Sigmoid colon (tissue), 7 donors: ENCODE measurements at regions of chr19 and their contacts with region 1.

Region 1: GRCh38 chr19:12365236-12366162 is at the start of gene ZNF442:
- DNase-seq: peak; percentile 98
- H3K4me3 ChIP-seq: peak within 1 kb of the TSS; percentile 69 to 95 (median 82)
- H3K27ac ChIP-seq: peak within 1 kb of the TSS; percentile 87 to 93 (median 90)
- H3K4me1 ChIP-seq: peaks cover 0 to 18% (median 10%) of the 10 kb centered on the region in 4 donors
- H3K27me3 ChIP-seq: no peaks in the 10 kb centered on the region
- CTCF ChIP-seq: peak; percentile 73 to 82 (median 77)
- EP300 ChIP-seq: peak in 1 of 4 donors; percentile 51
- POLR2A ChIP-seq: peak; percentile 77 to 78
- total RNA-seq, gene ZNF442: 0.55 to 3.2 (median 2.9) TPM

Region 2: DNA sequence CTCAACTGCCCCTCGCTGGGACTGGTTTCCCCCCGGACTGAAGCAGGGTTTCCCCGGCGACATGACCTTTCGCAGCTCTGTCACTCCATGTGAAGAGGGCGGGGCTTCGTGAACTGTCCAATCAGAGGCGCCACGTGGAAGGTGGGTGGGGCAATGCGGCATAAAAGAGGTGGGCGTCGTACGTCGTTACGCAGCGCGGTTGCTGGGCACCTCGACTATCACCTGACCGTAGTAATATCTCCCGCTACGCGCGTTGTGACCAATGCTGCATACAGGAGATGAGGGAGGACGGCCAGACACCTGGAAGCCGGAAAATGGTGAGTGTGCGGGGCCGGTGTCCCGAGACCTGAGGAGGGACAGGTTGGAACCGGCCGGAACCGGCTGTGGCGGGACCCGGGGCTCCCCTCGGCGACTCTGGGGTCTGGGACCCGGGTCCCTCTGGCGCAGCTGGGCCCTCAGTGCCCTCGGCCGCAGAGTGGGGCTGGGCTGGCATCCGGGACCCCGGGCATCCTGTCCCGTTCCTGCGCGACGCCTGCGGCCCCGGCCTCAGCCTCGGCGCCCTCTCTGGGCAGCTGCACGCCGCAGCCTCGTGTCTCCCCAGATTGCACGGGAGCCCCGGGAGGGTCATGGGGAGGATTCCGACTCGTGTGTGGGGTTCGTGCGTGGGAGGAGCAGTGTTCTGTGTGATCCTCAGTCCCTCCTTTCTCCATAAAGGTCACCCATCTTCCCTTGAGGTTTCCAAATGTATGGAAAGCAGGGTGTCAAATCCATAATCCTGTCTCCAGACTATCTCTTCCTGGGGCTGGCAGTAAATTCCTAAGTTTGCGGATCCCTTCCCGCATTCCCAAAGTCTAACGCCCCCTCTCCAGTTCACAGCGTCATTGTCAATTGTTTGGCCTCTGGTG is 170.4 kb before region 1 on chr19:
- intact Hi-C with region 1: loop called (anchors 10 kb)
- DNase-seq: peak; percentile 94
- H3K4me3 ChIP-seq: peak overlapping the region; percentile 68 to 81 (median 72)
- H3K27ac ChIP-seq: peak overlapping the region; percentile 84 to 86 (median 84)
- H3K4me1 ChIP-seq: peaks cover 0 to 17% (median 9%) of the 10 kb centered on the region in 4 donors
- H3K27me3 ChIP-seq: no peaks in the 10 kb centered on the region
- CTCF ChIP-seq: no peak
- EP300 ChIP-seq: peak in 2 of 4 donors; percentile 7 to 37
- POLR2A ChIP-seq: peak in 1 of 2 donors; percentile 12

Region 3: DNA sequence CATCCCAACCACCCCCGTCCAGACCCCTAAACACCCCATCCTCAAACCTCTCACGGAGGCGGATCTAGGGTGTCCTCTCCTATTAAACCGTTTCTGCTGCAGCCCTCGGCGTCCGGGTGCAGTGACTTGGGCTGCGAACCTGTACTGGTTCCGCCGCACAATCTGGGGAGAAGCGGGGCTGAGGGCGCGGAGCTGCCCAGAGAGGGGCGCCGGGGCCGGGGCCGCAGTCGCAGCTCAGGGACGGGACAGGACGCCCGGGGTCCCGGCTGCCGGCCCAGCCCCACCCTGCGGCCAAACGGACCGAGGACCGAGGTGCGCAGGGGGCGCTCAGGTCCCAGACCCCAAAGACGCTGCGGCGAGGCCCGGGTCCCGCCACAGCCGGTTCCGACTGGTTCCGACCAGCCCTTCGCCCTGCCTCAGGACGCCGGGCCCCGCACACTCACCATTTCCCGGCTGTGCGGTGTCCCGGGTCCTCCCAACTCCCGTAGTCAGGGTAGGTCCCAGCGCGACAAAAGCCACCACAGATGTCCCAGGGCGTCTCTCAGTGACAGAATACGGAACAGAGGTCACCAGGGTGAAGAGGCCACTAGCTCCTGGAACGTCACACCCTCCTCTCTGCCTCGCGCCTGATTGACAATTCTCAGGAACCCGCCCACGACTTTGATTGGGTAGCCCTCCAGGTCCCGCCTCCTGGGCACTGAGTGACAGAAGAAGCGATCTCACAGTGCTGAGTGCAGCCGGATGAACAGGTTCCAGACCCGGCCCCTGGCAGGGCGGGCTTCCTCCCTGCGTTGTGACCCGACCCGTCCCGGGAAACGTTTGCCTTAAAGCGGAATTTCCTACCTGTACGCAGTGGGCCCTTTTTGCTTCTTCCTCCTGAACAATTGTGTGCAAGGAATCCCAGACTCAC is 71.0 kb before region 1 on chr19 and contains the start of gene ZNF44:
- intact Hi-C with region 1: loop called (anchors 2 kb)
- DNase-seq: peak; percentile 99
- H3K4me3 ChIP-seq: peak within 1 kb of the TSS; percentile 89 to 99 (median 93)
- H3K27ac ChIP-seq: peak within 1 kb of the TSS; percentile 94 to 98 (median 95)
- H3K4me1 ChIP-seq: peaks cover 0 to 41% (median 21%) of the 10 kb centered on the region in 4 donors
- H3K27me3 ChIP-seq: no peaks in the 10 kb centered on the region
- CTCF ChIP-seq: no peak
- EP300 ChIP-seq: no peak
- POLR2A ChIP-seq: peak; percentile 58 to 85
- total RNA-seq, gene ZNF44: 6.4 to 16.3 (median 11.2) TPM

Region 4: GRCh38 chr19:12333162-12334159 is 32.0 kb before region 1 on chr19 and contains the start of gene ZNF563:
- intact Hi-C with region 1: loop called (anchors 1 kb)
- DNase-seq: peak; percentile 99
- H3K4me3 ChIP-seq: peak within 1 kb of the TSS; percentile 71 to 87 (median 77)
- H3K27ac ChIP-seq: peak within 1 kb of the TSS; percentile 89 to 97 (median 93)
- H3K4me1 ChIP-seq: peaks cover 0 to 12% (median 11%) of the 10 kb centered on the region in 4 donors
- H3K27me3 ChIP-seq: no peaks in the 10 kb centered on the region
- CTCF ChIP-seq: no peak
- EP300 ChIP-seq: no peak
- POLR2A ChIP-seq: peak; percentile 75 to 90
- total RNA-seq, gene ZNF563: 2.5 to 6.6 (median 4.3) TPM

Region 5: GRCh38 chr19:12400633-12401502 is 35.4 kb after region 1 on chr19 and contains the start of gene ZNF799:
- intact Hi-C with region 1: loop called (anchors 2 kb)
- DNase-seq: peak; percentile 99
- H3K4me3 ChIP-seq: peak within 1 kb of the TSS; percentile 58 to 79 (median 66)
- H3K27ac ChIP-seq: peak within 1 kb of the TSS; percentile 84 to 92 (median 88)
- H3K4me1 ChIP-seq: peaks cover 0 to 9% (median 5%) of the 10 kb centered on the region in 4 donors
- H3K27me3 ChIP-seq: no peaks in the 10 kb centered on the region
- CTCF ChIP-seq: no peak
- EP300 ChIP-seq: peak in 1 of 4 donors; percentile 57
- POLR2A ChIP-seq: peak in 1 of 2 donors; percentile 79
- total RNA-seq, gene ZNF799: 4.6 to 7.4 (median 5.8) TPM

Region 6: DNA sequence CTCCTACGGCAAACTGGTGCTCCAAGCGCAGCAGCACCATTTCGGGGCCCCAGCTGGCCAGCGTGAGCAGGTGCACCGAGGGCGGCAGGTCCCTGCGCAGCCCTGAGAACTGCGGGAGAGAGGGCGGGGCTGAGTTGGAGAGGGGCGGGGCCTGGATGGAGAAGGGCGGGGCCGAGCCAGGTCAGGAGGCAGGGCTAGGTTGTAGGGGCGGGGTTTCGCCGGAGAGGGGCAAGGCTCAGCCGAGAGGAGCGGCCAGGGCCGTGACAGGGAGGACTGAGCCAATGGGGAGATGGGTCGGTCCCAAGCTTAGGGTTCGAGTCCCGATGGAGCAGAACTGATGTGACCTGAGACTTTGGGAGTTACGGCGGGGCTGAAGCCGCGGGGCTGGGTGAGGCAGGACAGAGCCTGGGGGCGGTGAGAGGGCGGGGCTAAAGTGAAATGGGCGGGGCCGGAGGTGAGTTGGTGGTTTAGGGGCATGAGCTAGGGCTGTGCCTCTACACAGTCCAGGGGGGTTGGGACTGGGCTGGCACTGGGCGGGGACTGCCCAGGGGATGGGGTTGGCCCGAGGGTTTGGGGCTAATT is 282.1 kb after region 1 on chr19:
- intact Hi-C with region 1: no loop called
- DNase-seq: peak; percentile 83
- H3K4me3 ChIP-seq: peak overlapping the region; percentile 8 to 46 (median 37)
- H3K27ac ChIP-seq: peak overlapping the region in 2 of 4 donors; percentile 1 to 11
- H3K4me1 ChIP-seq: peaks cover 0 to 17% (median 15%) of the 10 kb centered on the region in 4 donors
- H3K27me3 ChIP-seq: no peaks in the 10 kb centered on the region
- CTCF ChIP-seq: no peak
- EP300 ChIP-seq: no peak
- POLR2A ChIP-seq: no peak